Activated CD8-positive, alpha-beta T cell treated with anti-CD3 and anti-CD28 coated beads for 36 hours (primary cell): ENCODE measurements at regions of chr15 and their contacts with region 1.

Region 1: GRCh38 chr15:75201609-75202250 is at the start of gene C15orf39:
- DNase-seq: peak; percentile 73
- ATAC-seq: peak; percentile 58
- H3K4me3 Mint-ChIP-seq: peak within 1 kb of the TSS; percentile 92
- H3K27ac Mint-ChIP-seq: peak within 1 kb of the TSS; percentile 92
- H3K4me1 Mint-ChIP-seq: peaks cover 45% of the 10 kb centered on the region
- H3K27me3 Mint-ChIP-seq: no peaks in the 10 kb centered on the region
- CTCF ChIP-seq: peak; percentile 99
- total RNA-seq, gene C15orf39: 22.1 to 24.1 TPM

Region 2: GRCh38 chr15:75023181-75023871 is 178.4 kb before region 1 on chr15 and contains the start of gene PPCDC:
- CTCF ChIA-PET with region 1: interaction called, 89 read pairs
- POLR2A ChIA-PET with region 1: interaction called, 24 read pairs
- intact Hi-C with region 1: no loop called
- DNase-seq: peak; percentile 97
- ATAC-seq: peak; percentile 100
- H3K4me3 Mint-ChIP-seq: peak within 1 kb of the TSS; percentile 93
- H3K27ac Mint-ChIP-seq: peak within 1 kb of the TSS; percentile 90
- H3K4me1 Mint-ChIP-seq: peaks cover 19% of the 10 kb centered on the region
- H3K27me3 Mint-ChIP-seq: no peaks in the 10 kb centered on the region
- CTCF ChIP-seq: no peak
- total RNA-seq, gene PPCDC: 25.7 to 26.6 TPM

Region 3: DNA sequence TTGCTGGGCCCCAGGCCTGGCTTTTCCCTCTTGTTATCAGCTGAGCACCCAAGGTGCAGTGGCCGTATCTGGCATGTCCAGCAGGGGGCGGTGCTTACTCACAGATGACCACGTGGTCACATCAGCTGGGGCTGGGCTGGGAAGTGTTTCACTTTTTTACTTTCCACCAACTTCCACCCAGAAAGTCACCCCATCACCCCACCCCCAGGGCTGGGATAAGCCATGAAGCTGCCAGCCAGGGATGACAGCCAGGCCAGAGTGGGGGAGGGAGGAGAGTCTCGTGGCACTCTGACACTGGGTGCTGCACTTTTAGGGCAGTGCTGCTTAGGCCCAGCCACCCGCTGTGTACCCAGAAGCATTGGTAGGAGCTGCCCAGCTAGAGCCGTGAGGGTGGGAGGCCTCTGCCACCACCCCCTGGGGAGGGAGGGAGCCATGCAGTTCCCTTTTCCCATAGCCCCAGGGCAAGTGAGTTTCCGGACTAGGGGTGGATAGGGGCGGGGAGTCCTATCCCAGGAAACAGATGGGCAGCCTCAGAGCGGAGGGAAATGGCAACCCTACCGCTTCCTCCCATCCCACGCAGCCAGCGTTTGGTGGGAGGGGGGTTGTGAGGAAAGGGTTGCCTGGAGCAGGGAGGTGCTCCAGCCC is 172.2 kb before region 1 on chr15:
- CTCF ChIA-PET with region 1: interaction called, 89 read pairs
- POLR2A ChIA-PET with region 1: interaction called, 24 read pairs
- intact Hi-C with region 1: loop called (anchors 2 kb)
- DNase-seq: peak; percentile 94
- ATAC-seq: peak; percentile 92
- H3K4me3 Mint-ChIP-seq: no peak overlapping the region
- H3K27ac Mint-ChIP-seq: no peak overlapping the region
- H3K4me1 Mint-ChIP-seq: peaks cover 45% of the 10 kb centered on the region
- H3K27me3 Mint-ChIP-seq: no peaks in the 10 kb centered on the region
- CTCF ChIP-seq: peak; percentile 94

Region 4: GRCh38 chr15:75037656-75038055 is 164.1 kb before region 1 on chr15:
- CTCF ChIA-PET with region 1: interaction called, 30 read pairs
- POLR2A ChIA-PET with region 1: interaction called, 7 read pairs
- intact Hi-C with region 1: no loop called
- DNase-seq: peak; percentile 60
- ATAC-seq: peak; percentile 76
- H3K4me3 Mint-ChIP-seq: no peak overlapping the region
- H3K27ac Mint-ChIP-seq: peak overlapping the region; percentile 71
- H3K4me1 Mint-ChIP-seq: peaks cover 34% of the 10 kb centered on the region
- H3K27me3 Mint-ChIP-seq: no peaks in the 10 kb centered on the region
- CTCF ChIP-seq: no peak

Region 5: DNA sequence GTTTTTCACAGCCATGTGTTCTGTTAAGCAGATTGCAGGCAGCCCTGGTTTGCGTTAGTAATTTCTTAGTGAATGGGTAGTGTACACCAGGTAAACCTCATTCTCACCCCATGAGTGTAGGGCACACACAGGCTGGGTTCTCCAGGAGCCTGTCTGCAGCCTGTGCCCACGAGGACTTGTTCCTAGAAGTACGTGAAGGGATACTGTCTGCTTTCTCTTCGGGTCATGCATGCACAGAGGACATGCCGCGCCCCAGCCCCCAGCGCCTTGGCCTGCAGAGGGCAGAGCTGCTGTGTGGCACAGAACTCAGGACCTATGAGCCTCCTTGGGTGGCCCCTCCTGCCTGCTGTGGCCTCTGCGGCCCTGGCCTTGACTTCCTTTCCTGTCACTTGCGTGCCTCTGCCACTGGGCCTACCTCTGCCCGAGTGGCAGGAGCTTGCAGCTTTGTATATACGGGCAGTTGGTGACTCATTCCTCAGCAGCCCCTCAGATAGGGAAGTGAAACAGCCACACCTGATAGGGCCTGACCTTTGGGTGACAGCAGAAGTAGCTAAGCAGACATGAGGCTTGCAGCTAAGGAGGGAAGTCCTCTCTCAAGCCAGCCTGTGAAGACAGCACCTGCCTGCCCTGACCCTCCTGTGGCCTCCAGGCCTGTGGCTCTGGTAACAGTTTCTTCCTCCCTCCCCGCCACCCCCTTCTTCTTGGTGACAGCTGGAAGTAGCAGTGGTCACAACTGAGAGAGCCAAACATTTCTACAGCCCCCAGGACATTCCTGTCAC is 158.8 kb before region 1 on chr15:
- CTCF ChIA-PET with region 1: interaction called, 30 read pairs
- POLR2A ChIA-PET with region 1: interaction called, 7 read pairs
- intact Hi-C with region 1: no loop called
- DNase-seq: peak; percentile 89
- ATAC-seq: peak; percentile 91
- H3K4me3 Mint-ChIP-seq: no peak overlapping the region
- H3K27ac Mint-ChIP-seq: peak overlapping the region; percentile 70
- H3K4me1 Mint-ChIP-seq: peaks cover 50% of the 10 kb centered on the region
- H3K27me3 Mint-ChIP-seq: no peaks in the 10 kb centered on the region
- CTCF ChIP-seq: peak; percentile 57

Region 6: GRCh38 chr15:75067123-75067830 is 134.5 kb before region 1 on chr15:
- CTCF ChIA-PET with region 1: interaction called, 11 read pairs
- POLR2A ChIA-PET with region 1: no interaction called
- intact Hi-C with region 1: no loop called
- DNase-seq: peak; percentile 82
- ATAC-seq: peak; percentile 78
- H3K4me3 Mint-ChIP-seq: no peak overlapping the region
- H3K27ac Mint-ChIP-seq: peak overlapping the region; percentile 66
- H3K4me1 Mint-ChIP-seq: peaks cover 31% of the 10 kb centered on the region
- H3K27me3 Mint-ChIP-seq: peaks cover 13% of the 10 kb centered on the region
- CTCF ChIP-seq: no peak

Region 7: GRCh38 chr15:75107908-75108838 is 93.6 kb before region 1 on chr15:
- CTCF ChIA-PET with region 1: interaction called, 13 read pairs
- POLR2A ChIA-PET with region 1: interaction called, 9 read pairs
- intact Hi-C with region 1: no loop called
- DNase-seq: peak; percentile 92
- ATAC-seq: peak; percentile 86
- H3K4me3 Mint-ChIP-seq: no peak overlapping the region
- H3K27ac Mint-ChIP-seq: peak overlapping the region; percentile 80
- H3K4me1 Mint-ChIP-seq: peaks cover 41% of the 10 kb centered on the region
- H3K27me3 Mint-ChIP-seq: peaks cover 23% of the 10 kb centered on the region
- CTCF ChIP-seq: no peak